H1 (cell line): ENCODE measurements at regions of chr4 and their contacts with region 1.

Region 1: DNA sequence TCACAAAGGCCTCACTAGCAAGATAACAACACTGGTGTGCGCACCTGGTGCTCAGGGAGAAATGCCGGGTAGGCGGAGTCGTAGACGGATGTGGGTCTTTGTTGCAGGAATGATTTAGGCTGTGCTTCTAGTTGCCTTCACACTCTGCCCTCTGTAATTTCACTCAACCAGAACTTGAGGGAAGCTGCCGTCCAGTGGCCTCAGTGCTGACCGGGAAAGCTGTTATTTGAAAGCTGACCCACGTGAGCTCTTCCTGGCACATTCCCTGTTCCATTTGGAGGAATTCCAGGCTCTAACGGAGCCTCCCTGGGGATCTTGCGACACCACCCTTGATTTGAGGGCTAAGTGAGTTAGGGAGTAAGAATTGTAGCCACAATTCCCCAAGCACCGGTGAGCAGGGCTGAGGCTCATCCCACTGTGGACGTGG is 15.9 kb downstream of the SH3TC1 start:
- DNase-seq: no peak
- H3K4me3 ChIP-seq: no peak overlapping the region
- H3K27ac ChIP-seq: no peak overlapping the region
- H3K4me1 ChIP-seq: peaks cover 0 to 8% (median 0%) of the 10 kb centered on the region in 4 experiments; a peak in 1 of 7 replicates
- H3K27me3 ChIP-seq: no peaks in the 10 kb centered on the region
- CTCF ChIP-seq: no peak
- EP300 ChIP-seq: no peak
- POLR2A ChIP-seq: no peak
- RAD21 ChIP-seq: no peak

Region 2: DNA sequence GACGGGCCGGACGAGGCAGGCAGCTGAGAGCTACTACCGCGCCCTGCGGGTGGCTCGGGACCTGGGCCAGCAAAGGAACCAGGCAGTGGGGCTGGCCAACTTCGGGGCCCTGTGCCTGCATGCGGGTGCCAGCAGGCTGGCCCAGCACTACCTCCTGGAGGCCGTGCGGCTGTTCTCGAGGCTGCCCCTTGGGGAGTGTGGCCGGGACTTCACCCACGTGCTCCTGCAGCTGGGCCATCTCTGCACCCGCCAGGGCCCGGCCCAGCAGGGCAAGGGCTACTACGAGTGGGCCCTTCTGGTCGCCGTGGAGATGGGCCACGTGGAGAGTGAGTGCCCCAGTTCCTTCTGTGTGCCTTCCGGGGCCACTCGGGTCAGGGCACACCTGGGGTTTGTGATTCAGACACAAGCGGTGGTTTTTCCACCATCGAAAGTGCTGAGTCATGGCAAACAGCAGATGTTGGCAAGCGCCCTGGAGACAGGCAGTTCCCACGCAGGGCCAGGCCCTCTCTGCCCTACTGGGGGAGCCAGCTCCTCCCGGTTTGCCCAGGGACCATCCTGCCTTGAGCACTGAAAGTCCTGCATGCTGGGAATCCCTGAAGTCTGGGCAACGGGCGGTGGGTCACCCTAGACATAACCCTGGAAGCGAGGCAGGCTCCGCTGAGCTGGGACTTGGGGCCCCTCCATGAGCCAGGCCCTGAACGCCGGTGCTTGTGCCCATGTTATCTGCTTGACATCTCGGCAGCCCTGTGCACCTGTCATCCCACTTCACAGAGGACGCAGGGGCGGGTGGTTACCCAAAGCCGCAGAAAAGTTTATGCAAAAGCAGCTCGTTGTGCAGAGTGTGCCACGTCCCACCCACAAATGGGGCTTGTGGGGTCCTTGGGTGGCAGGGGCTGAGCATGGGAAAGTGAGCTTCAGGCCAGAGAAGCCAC is 13.6 kb after region 1 on chr4:
- CTCF ChIA-PET with region 1: interaction called, 19 read pairs
- POLR2A ChIA-PET with region 1: interaction called, 4 read pairs
- DNase-seq: no peak
- H3K4me3 ChIP-seq: no peak overlapping the region
- H3K27ac ChIP-seq: no peak overlapping the region
- H3K4me1 ChIP-seq: peaks cover 6 to 17% (median 11%) of the 10 kb centered on the region in 4 experiments
- H3K27me3 ChIP-seq: no peaks in the 10 kb centered on the region; a peak in 1 of 7 replicates
- CTCF ChIP-seq: no peak
- EP300 ChIP-seq: no peak
- POLR2A ChIP-seq: no peak
- RAD21 ChIP-seq: no peak